ENCODE measurements at regions of chr21 and their contacts with region 1.

Region 1: DNA sequence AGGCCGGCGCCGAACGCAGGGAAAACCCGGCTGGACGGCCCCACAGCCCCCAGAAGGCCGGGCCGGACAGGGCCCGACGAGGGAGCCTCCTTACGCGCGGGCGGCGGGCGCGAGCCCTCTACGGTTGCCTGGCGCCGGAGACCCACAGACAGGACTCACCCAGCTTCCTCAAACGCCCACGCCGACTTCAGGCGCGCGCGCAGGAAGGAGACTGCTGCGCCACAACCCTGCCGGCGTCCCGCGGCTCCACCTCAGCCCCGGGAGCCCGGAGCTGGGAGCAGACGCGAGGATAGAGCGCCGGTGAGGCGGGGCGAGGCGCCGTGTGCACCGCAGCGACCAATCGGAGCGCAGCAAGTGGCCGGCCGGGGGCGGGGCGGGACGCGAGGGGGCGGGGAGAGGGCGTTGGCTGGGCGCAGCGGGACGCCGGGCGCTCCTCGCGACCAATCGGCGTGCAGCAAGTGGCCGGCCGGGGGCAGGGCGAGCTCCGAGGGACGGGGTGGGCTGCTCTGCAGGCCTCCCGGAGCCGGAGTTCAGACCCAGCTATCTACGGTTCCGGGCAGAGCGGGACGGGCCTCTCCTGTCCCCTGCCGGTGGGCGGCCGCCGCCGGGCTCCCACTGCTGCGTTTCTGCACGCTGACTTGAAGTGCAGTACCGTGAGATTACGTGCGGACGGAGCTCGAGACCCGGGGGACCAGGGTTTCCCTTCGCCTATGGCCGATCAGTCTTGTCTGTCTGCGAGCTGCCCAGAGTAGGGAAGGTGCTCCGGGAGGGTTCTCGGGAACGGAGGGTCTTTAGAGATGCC is at the start of gene TMEM50B:
- DNase-seq: peak; percentile 91 to 98
- H3K4me3 ChIP-seq: peak within 1 kb of the TSS; percentile 70 to 79
- H3K27ac ChIP-seq: peak within 1 kb of the TSS; percentile 84 to 96
- H3K4me1 ChIP-seq: peaks cover 0 to 23% (median 12%) of the 10 kb centered on the region in 4 donors
- H3K27me3 ChIP-seq: no peaks in the 10 kb centered on the region
- CTCF ChIP-seq: peak; percentile 52 to 58

Region 2: GRCh38 chr21:33539612-33540011 is 59.7 kb after region 1 on chr21:
- intact Hi-C with region 1: loop called (anchors 10 kb)
- DNase-seq: no peak
- H3K4me3 ChIP-seq: no peak overlapping the region
- H3K27ac ChIP-seq: no peak overlapping the region
- H3K4me1 ChIP-seq: peaks cover 0 to 13% (median 10%) of the 10 kb centered on the region in 4 donors
- H3K27me3 ChIP-seq: no peaks in the 10 kb centered on the region
- CTCF ChIP-seq: no peak

Region 3: DNA sequence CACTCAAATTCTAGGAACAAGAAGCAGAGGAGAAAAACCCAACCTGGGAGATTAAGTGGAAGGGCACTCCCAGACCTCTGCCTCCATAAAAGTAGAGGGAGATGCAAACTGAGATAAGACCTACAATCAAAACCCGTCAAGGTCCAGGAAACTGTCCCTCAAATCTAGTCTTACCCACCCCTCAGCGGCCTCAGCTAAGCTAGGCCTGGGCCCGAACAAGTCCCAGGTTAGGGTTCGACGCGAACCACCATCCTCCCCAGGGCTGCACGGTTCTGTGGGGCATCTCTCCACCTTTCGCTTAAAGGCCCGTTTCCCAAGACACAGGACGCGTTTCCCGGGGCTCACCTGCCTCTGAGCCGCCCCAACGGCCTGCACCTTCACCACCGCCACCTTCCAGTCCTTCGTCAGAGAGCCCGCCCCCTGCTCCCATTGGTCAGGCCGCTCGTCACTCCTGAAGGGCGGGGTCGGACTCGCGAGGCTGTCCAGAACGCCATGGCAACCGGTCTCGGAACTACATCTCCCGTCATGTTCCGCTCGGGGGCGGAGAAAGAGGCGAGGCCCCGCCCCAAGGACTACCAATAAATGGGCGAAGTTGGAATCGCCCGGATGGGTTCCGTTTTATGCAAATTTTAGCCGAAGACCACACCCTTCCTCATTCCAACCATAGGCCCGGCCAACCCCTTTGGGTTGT is 161.6 kb after region 1 on chr21 and contains the start of gene CRYZL1:
- intact Hi-C with region 1: loop called (anchors 5 kb)
- DNase-seq: peak; percentile 100
- H3K4me3 ChIP-seq: peak within 1 kb of the TSS; percentile 94 to 97
- H3K27ac ChIP-seq: peak within 1 kb of the TSS; percentile 89 to 90
- H3K4me1 ChIP-seq: peaks cover 0 to 38% (median 22%) of the 10 kb centered on the region in 4 donors
- H3K27me3 ChIP-seq: no peaks in the 10 kb centered on the region
- CTCF ChIP-seq: peak in 1 of 2 experiments; percentile 5

Region 4: GRCh38 chr21:34888569-34889319 is 1408.9 kb after region 1 on chr21:
- intact Hi-C with region 1: loop called (anchors 10 kb)
- DNase-seq: peak; percentile 95 to 96
- H3K4me3 ChIP-seq: peak overlapping the region; percentile 66 to 67
- H3K27ac ChIP-seq: peak overlapping the region; percentile 78 to 80
- H3K4me1 ChIP-seq: peaks cover 0 to 37% (median 23%) of the 10 kb centered on the region in 4 donors
- H3K27me3 ChIP-seq: peaks cover 0 to 59% of the 10 kb centered on the region in 2 donors
- CTCF ChIP-seq: no peak

Measured in tibial artery (tissue), 4 donors.